ENCODE measurements at regions of chr5 and their contacts with region 1.

Region 1: DNA sequence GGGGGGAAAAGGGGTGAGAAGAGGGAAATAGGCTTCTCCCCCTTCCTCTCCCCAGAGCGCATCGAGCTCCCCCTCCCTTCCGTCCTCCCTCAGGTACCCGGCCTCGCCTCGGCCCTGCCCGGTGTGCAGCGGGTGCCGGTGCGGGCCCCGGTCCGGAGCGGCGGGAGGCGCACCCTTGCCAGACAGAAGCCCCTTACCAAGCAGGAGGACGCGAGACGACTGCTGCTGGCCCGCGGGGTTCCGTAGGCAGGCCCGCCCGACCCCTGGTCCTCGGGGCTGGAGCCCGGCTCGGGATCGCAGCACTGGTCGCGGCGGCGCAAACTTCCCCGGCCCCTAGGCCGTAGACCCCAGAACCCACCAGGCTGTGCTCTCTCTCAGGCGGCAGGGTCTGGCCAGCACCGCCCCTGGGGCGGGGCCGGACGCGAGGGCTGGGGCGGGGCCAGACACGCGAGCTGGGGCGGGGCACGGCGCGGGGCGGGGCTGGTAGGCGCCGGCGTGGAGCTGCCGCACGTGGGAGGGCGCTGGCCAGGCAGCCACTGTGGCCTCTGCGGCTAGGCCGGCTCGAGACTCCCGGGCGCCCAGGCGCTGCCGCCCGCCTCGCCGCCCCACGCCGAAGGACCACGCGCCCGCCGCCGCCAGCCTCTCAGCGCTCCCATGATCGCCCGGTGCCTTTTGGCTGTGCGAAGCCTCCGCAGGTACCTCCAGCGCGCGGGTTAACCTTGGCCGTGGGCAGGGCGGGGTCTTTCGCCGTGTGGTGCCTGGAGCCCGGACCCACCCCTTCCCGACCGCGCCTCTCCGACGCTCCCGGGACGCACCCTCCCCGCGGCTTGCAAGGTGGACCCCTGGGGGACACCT is at the starts of genes NLN and SGTB:
- DNase-seq: peak; percentile 65 to 77 (median 70)
- H3K4me3 ChIP-seq: peak within 1 kb of the TSS; percentile 77 to 95 (median 93)
- H3K4me3 Mint-ChIP-seq: peak within 1 kb of the TSS; percentile 95 to 97
- H3K27ac ChIP-seq: peak within 1 kb of the TSS; percentile 89
- H3K27ac Mint-ChIP-seq: peak within 1 kb of the TSS; percentile 86 to 95 (median 89)
- H3K4me1 ChIP-seq: peaks cover 35 to 46% of the 10 kb centered on the region in 2 donors
- H3K4me1 Mint-ChIP-seq: peaks cover 42% of the 10 kb centered on the region
- H3K27me3 ChIP-seq: no peaks in the 10 kb centered on the region
- H3K27me3 Mint-ChIP-seq: no peaks in the 10 kb centered on the region
- CTCF ChIP-seq: no peak
- polyA plus RNA-seq, gene NLN: 8.7 to 39.2 (median 17.7) TPM
- polyA plus RNA-seq, gene SGTB: 7.4 to 16.5 (median 7.6) TPM

Region 2: DNA sequence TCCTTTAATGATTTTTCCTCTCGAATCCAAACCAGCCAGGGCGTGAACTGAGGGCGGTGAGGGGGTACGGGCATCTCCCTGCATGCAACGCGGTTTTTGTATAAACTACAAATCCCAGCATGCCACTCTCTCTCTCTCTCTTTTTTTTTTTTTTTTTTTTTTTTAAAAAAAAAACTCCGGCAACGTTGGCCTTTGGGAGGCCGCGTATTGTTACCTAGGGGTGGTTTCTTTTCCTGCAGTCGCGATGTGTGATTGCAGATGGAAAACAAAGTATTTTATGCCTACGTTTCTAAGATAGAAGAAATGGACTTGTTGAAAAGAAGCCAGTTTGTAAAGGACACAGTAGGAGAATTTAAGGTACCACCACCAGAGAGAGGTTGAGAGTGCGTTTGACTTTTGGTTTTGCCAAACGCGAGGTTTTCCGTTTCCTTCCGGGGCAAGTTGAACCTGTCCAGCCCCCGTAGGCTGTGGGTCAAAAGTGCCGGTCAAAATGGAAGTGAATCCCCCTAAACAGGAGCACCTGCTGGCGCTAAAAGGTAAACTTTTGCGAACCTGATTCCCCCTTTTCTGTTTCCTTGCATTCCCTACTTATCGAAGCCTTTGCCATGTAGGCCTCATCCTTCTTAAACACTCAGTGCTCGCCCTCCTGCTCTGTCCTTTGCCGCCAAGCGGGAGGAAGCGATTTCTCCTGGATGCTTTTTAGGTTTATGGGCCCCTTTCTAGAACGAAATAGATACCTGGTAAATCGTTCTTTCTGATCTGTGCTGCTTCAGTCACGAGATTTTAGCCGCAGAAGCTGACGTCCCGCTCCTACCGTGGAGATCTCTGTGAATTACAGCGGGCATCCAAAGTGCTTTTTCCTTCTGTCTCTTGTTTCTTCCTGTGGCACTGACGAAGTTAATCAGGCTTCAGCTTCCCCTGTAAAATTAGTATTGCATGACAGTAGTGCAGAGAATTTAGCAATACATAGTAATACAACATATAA is 97.1 kb before region 1 on chr5 and contains the starts of genes SHLD3 and TRAPPC13:
- intact Hi-C with region 1: loop called (anchors 5 to 10 kb)
- DNase-seq: peak; percentile 81 to 85 (median 83)
- H3K4me3 ChIP-seq: peak within 1 kb of the TSS; percentile 86 to 98 (median 94)
- H3K4me3 Mint-ChIP-seq: peak within 1 kb of the TSS; percentile 90 to 99
- H3K27ac ChIP-seq: peak within 1 kb of the TSS; percentile 87 to 93
- H3K27ac Mint-ChIP-seq: peak within 1 kb of the TSS; percentile 94 to 98 (median 97)
- H3K4me1 ChIP-seq: peaks cover 18 to 35% of the 10 kb centered on the region in 2 donors
- H3K4me1 Mint-ChIP-seq: peaks cover 29% of the 10 kb centered on the region
- H3K27me3 ChIP-seq: no peaks in the 10 kb centered on the region
- H3K27me3 Mint-ChIP-seq: no peaks in the 10 kb centered on the region
- CTCF ChIP-seq: no peak
- polyA plus RNA-seq, gene SHLD3: 2.0 to 4.9 (median 2.6) TPM
- polyA plus RNA-seq, gene TRAPPC13: 12.0 to 17.3 (median 14.9) TPM

Region 3: DNA sequence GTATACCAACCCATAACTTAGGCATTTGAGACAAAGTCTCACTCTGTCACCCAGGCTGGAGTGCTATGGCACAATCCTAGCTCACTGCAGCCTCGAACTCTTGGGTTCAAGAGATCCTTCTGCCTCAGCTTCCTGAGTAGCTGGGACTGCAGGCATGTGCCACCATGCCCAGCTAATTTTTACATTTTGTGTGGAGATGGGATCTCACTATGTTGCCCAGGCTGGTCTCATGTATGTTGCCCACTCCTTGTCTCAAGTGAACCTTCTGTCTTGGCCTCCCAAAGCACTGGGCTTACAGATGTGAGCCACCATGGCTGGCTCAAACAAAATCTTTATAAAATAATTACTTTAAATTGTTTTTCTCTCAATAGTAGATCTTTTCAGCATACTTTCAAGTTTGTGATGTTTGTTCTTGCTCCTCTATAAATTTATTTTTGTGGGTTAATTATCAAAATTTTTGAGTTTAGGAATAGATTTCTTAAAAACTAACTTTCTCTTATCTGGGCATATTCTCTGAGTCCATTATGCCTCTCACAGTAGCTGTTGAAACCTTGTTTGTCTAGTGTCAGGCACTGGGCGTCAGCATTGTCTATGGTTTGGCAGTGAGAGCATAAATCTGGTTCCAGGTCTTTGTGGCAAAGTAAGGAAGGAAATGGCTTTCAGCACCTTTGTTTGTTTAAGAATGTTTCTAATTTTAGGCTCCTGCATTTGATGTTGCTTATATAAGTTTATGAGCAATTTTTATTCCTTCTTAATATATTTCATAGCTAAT is 38.7 kb after region 1 on chr5:
- intact Hi-C with region 1: no loop called
- DNase-seq: no peak
- H3K4me3 ChIP-seq: no peak overlapping the region
- H3K4me3 Mint-ChIP-seq: no peak overlapping the region
- H3K27ac ChIP-seq: peak overlapping the region in 1 of 2 donors; percentile 17
- H3K27ac Mint-ChIP-seq: peak overlapping the region in 1 of 7 donors; percentile 5
- H3K4me1 ChIP-seq: no peaks in the 10 kb centered on the region
- H3K4me1 Mint-ChIP-seq: no peaks in the 10 kb centered on the region
- H3K27me3 ChIP-seq: no peaks in the 10 kb centered on the region
- H3K27me3 Mint-ChIP-seq: no peaks in the 10 kb centered on the region
- CTCF ChIP-seq: no peak

Region 4: DNA sequence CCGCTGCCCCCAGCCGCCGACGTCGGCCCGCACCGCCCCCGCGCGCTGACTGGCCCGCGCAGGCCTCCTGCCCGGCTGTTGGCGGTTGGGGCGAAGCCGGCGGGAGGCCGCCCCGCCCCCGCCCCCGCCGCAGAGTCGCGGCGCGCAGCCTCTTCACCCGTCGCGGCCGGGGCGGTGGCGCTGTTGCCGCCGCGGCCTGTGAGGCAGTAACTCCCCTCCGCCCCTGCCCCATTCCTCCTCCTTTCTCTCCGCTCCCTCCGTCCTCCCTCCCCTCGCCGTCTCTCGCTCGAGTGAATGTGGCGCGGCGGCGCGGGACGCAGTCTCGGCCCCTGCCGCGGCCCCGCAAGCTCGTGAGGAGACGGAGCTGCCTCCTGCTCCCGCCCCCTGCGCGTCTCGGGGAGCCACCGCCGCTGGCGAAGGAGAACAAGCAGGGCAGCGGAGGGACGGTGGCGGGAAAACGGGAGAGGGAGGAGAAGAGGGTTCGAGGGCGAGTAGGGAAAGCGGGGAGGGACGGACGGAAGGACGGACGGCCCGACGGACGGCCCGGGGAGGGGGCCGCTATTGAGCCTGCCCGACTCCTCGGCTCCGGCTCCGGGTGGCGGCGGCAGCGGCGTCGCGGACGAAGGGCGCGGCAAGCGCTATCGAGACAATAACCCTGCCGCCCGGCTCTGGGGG is 203.8 kb after region 1 on chr5:
- intact Hi-C with region 1: loop called (anchors 5 kb)
- DNase-seq: peak; percentile 78 to 81 (median 80)
- H3K4me3 ChIP-seq: peak overlapping the region; percentile 59 to 92 (median 91)
- H3K4me3 Mint-ChIP-seq: peak overlapping the region; percentile 83 to 88
- H3K27ac ChIP-seq: peak overlapping the region; percentile 97 to 98
- H3K27ac Mint-ChIP-seq: peak overlapping the region; percentile 87 to 97 (median 94)
- H3K4me1 ChIP-seq: peaks cover 19 to 45% of the 10 kb centered on the region in 2 donors
- H3K4me1 Mint-ChIP-seq: peaks cover 44% of the 10 kb centered on the region
- H3K27me3 ChIP-seq: peaks cover 3 to 8% of the 10 kb centered on the region in 2 donors
- H3K27me3 Mint-ChIP-seq: peaks cover 4 to 11% (median 4%) of the 10 kb centered on the region in 3 donors
- CTCF ChIP-seq: peak; percentile 12

Region 5: DNA sequence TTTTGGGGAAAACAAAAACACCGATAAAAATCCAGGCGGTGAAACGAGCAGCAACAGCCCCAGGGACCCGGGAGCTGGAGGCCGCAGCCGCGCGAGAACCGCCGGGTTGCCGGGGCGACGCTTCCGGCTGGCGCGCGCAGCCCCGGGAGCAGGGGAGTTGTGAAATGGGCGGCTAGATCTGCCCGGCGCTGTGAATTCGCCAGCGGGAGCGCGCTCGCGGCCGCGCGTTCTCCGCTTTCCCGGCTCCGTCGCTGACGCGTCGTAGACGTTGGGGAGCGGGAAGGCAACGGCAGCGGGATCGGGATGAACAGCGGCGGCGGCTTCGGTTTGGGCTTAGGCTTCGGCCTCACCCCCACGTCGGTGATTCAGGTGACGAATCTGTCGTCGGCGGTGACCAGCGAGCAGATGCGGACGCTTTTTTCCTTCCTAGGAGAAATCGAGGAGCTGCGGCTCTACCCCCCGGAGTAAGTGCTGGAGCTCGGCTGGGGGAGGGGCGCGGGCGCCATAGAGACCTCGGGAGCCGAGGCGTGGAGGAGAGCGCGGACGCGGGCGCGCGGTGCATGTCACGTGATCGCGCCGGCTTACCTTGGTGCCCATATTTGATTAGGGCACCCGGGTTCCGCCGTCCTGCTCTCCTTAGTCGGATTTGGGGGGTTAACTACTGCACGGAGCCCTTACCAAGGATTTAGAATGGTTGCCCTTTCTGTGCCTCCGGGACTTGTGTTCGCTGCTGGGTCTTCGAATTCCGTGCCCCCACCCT is 422.3 kb after region 1 on chr5 and contains the start of gene SREK1:
- intact Hi-C with region 1: loop called in 1 of 2 experiments (anchors 5 kb)
- DNase-seq: peak; percentile 85 to 87 (median 85)
- H3K4me3 ChIP-seq: peak within 1 kb of the TSS; percentile 66 to 99 (median 86)
- H3K4me3 Mint-ChIP-seq: peak within 1 kb of the TSS; percentile 97
- H3K27ac ChIP-seq: peak within 1 kb of the TSS; percentile 98 to 100
- H3K27ac Mint-ChIP-seq: peak within 1 kb of the TSS; percentile 99 to 100 (median 100)
- H3K4me1 ChIP-seq: peaks cover 11 to 26% of the 10 kb centered on the region in 2 donors
- H3K4me1 Mint-ChIP-seq: peaks cover 27% of the 10 kb centered on the region
- H3K27me3 ChIP-seq: no peaks in the 10 kb centered on the region
- H3K27me3 Mint-ChIP-seq: no peaks in the 10 kb centered on the region
- CTCF ChIP-seq: no peak
- polyA plus RNA-seq, gene SREK1: 6.4 to 34.8 (median 9.8) TPM

Measured in CD14-positive monocyte (primary cell).